ENCODE measurements at regions of chr19 and their contacts with region 1.

Region 1: GRCh38 chr19:44718441-44719261 is 19.7 kb downstream of the CEACAM16 start:
- DNase-seq: peak; percentile 75 to 79
- H3K4me3 ChIP-seq: peak overlapping the region; percentile 32; the same call in 1 of the 2 replicates
- H3K27ac ChIP-seq: peak overlapping the region; percentile 86
- H3K4me1 ChIP-seq: peaks cover 57% of the 10 kb centered on the region
- H3K27me3 ChIP-seq: no peaks in the 10 kb centered on the region
- CTCF ChIP-seq: no peak

Region 2: GRCh38 chr19:44705502-44706010 is 13.1 kb before region 1 on chr19:
- CTCF ChIA-PET with region 1: interaction called, 13 read pairs
- POLR2A ChIA-PET with region 1: no interaction called
- intact Hi-C with region 1: no loop called
- DNase-seq: no peak
- H3K4me3 ChIP-seq: no peak overlapping the region
- H3K27ac ChIP-seq: no peak overlapping the region
- H3K4me1 ChIP-seq: no peaks in the 10 kb centered on the region
- H3K27me3 ChIP-seq: no peaks in the 10 kb centered on the region
- CTCF ChIP-seq: no peak

Region 3: DNA sequence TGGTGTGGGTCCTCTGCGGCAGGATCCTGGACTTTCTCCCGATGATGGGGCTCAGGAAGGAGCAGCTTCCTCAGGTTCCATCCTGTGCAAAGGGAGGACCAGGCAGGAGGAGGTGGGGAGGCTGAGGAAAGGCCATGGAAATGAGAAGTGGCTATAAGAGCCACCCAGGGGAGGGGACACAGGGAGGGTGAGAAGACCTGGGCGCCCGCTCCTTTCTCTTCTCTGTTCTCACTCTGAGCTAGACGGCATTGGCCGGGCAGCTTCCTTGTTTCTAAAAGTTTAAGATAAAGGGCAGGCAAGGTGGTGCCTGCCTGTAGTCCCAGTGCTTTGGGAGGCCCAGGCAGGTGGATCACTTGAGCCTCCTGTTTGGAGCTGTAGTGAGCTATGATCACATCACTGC is 14.0 kb after region 1 on chr19:
- CTCF ChIA-PET with region 1: interaction called, 8 read pairs
- POLR2A ChIA-PET with region 1: interaction called, 22 read pairs
- intact Hi-C with region 1: no loop called
- DNase-seq: no peak
- H3K4me3 ChIP-seq: no peak overlapping the region
- H3K27ac ChIP-seq: no peak overlapping the region
- H3K4me1 ChIP-seq: peaks cover 20% of the 10 kb centered on the region
- H3K27me3 ChIP-seq: no peaks in the 10 kb centered on the region
- CTCF ChIP-seq: no peak